ENCODE measurements at regions of chr1 and their contacts with region 1.

Region 1: DNA sequence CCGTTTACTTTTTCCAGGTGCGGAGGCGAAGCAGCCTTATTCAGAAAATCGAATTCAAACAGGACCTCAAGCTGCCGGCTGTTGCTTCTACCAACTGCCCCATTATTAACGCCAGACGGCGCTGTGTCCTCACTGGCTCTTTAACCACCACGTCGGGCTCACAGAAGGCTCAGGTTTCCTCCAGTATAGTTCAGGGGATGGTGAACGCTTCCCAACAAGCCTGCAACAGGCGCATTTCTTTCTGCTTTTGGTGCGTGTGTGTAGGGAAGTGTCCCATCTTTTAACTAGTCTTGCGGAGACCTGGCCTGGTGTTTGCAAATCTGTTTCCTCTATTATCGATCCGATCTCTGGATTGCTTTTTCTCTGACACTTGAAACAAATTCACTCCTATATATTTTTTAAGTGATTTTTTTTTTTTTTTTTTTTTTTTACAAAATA is 791 bp upstream of the STUM start:
- DNase-seq: peak; percentile 34 to 78 (median 56)
- ATAC-seq: peak; percentile 43
- H3K4me3 ChIP-seq: no peak overlapping the region
- H3K4me3 Mint-ChIP-seq: peak overlapping the region; percentile 58
- H3K27ac ChIP-seq: no peak overlapping the region
- H3K27ac Mint-ChIP-seq: no peak overlapping the region
- H3K4me1 ChIP-seq: peaks cover 20% of the 10 kb centered on the region
- H3K4me1 Mint-ChIP-seq: peaks cover 23% of the 10 kb centered on the region
- H3K27me3 ChIP-seq: peaks cover 6 to 18% of the 10 kb centered on the region in 2 experiments
- H3K27me3 Mint-ChIP-seq: peaks cover 25% of the 10 kb centered on the region
- CTCF ChIP-seq: peak; percentile 62

Region 2: GRCh38 chr1:226304291-226304955 is 243.3 kb before region 1 on chr1:
- CTCF ChIA-PET with region 1: no interaction called
- POLR2A ChIA-PET with region 1: no interaction called
- intact Hi-C with region 1: no loop called
- DNase-seq: no peak
- ATAC-seq: no peak
- H3K4me3 ChIP-seq: no peak overlapping the region
- H3K4me3 Mint-ChIP-seq: no peak overlapping the region
- H3K27ac ChIP-seq: no peak overlapping the region
- H3K27ac Mint-ChIP-seq: no peak overlapping the region
- H3K4me1 ChIP-seq: peaks cover 8% of the 10 kb centered on the region
- H3K4me1 Mint-ChIP-seq: peaks cover 23% of the 10 kb centered on the region
- H3K27me3 ChIP-seq: peaks cover 0 to 3% of the 10 kb centered on the region in 2 experiments
- H3K27me3 Mint-ChIP-seq: no peaks in the 10 kb centered on the region
- CTCF ChIP-seq: no peak

Region 3: DNA sequence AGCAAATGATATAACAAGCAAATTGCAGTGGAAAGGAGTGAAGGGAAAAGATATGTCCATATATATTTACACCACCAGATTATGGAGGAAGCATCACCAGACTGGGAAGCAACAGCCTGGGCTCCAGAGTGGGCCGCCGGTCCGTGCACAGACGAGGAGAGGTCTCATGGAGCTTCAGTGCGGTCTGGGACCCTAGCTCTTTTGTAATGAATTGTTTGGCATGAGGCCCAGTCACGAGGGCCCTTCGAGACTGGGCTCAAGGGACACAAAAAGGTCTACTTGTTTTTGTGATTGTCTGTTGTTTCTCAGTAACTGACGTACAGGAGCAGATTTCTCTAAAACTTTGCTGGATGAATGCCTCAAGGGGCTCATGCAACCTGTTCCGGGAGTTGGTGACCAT is 12.1 kb before region 1 on chr1:
- CTCF ChIA-PET with region 1: interaction called, 10 read pairs
- POLR2A ChIA-PET with region 1: no interaction called
- intact Hi-C with region 1: no loop called
- DNase-seq: no peak
- ATAC-seq: no peak
- H3K4me3 ChIP-seq: no peak overlapping the region
- H3K4me3 Mint-ChIP-seq: no peak overlapping the region
- H3K27ac ChIP-seq: no peak overlapping the region
- H3K27ac Mint-ChIP-seq: no peak overlapping the region
- H3K4me1 ChIP-seq: no peaks in the 10 kb centered on the region
- H3K4me1 Mint-ChIP-seq: no peaks in the 10 kb centered on the region
- H3K27me3 ChIP-seq: no peaks in the 10 kb centered on the region
- H3K27me3 Mint-ChIP-seq: peaks cover 3% of the 10 kb centered on the region
- CTCF ChIP-seq: no peak

Region 4: DNA sequence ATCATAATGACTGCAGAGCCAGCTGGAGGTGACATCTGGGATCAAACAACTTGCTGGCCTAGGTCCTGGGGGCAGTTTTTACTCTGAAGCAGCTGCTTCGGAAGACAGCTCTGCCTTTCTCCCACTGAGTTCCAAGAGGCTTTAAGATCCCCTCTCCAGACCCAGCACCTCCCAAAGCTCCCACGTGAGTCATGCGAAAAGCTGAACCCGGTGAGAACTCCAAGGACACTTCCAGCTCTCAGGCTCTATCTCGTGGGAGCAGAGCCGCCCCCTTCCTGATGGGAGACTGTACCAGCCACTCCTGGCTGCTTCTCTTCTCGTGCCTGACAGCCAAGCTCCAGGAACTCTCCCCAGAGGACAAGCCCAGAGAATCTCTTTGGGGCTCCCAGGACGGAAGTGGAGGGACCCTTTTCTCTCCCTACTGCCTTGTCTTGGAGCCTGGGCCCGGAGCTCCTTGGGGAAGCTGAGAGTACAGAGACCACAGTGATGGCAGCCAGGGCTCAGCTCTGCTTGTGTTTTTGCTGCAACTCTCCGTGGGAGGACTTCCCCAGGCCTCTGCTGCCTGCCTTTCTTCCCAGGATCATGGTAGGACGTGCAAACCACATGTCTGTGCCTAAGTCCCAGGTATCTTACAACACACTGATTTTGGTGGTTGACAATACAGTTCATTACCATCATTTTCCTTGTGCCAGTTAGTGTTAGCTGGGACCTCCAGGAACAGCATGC is 41.4 kb after region 1 on chr1:
- CTCF ChIA-PET with region 1: no interaction called
- POLR2A ChIA-PET with region 1: no interaction called
- intact Hi-C with region 1: no loop called
- DNase-seq: no peak
- ATAC-seq: no peak
- H3K4me3 ChIP-seq: no peak overlapping the region
- H3K4me3 Mint-ChIP-seq: no peak overlapping the region
- H3K27ac ChIP-seq: no peak overlapping the region
- H3K27ac Mint-ChIP-seq: no peak overlapping the region
- H3K4me1 ChIP-seq: no peaks in the 10 kb centered on the region
- H3K4me1 Mint-ChIP-seq: no peaks in the 10 kb centered on the region
- H3K27me3 ChIP-seq: no peaks in the 10 kb centered on the region
- H3K27me3 Mint-ChIP-seq: peaks cover 8% of the 10 kb centered on the region
- CTCF ChIP-seq: no peak